ENCODE measurements at regions of chr15 and their contacts with region 1.

Region 1: GRCh38 chr15:38699633-38700230 is 135.1 kb upstream of the RASGRP1 start:
- DNase-seq: peak in 1 of 2 donors; percentile 56
- ATAC-seq: no peak
- H3K4me3 ChIP-seq: no peak overlapping the region
- H3K27ac ChIP-seq: no peak overlapping the region
- H3K4me1 ChIP-seq: no peaks in the 10 kb centered on the region
- H3K27me3 ChIP-seq: no peaks in the 10 kb centered on the region

Region 2: GRCh38 chr15:38758043-38758442 is 58.3 kb after region 1 on chr15:
- intact Hi-C with region 1: no loop called
- DNase-seq: no peak
- ATAC-seq: no peak
- H3K4me3 ChIP-seq: no peak overlapping the region
- H3K27ac ChIP-seq: no peak overlapping the region
- H3K4me1 ChIP-seq: no peaks in the 10 kb centered on the region
- H3K27me3 ChIP-seq: no peaks in the 10 kb centered on the region

Region 3: GRCh38 chr15:38817427-38818156 is 117.9 kb after region 1 on chr15:
- intact Hi-C with region 1: loop called in 1 of 2 experiments (anchors 10 kb)
- DNase-seq: peak; percentile 76 to 93
- ATAC-seq: peak; percentile 91
- H3K4me3 ChIP-seq: no peak overlapping the region
- H3K27ac ChIP-seq: no peak overlapping the region
- H3K4me1 ChIP-seq: no peaks in the 10 kb centered on the region
- H3K27me3 ChIP-seq: no peaks in the 10 kb centered on the region

Region 4: DNA sequence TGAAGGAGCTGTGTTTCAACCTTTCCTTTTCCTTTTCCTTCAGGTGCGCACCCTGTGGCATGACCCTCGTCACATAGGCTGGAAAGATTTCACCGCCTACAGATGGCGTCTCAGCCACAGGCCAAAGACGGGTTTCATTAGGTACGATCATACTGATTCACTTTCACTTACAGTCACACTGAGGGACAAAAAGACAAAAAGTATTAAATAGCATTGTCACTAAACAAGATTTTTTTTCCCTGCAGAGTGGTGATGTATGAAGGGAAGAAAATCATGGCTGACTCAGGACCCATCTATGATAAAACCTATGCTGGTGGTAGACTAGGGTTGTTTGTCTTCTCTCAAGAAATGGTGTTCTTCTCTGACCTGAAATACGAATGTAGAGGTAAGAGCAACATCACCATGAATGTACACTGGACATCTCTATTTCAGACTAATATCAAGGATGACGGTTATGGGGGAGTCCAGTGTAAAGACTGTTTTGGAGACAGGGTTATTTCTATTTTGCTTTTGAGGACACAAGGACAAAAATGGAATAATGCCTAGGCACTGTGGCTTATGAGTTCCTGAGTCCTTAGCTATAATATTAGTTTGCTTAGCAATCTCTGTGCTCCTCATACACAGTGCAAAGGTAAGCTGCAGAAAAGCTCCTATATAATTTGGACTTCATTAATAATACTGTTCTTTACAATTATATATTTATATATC is 894.5 kb after region 1 on chr15:
- intact Hi-C with region 1: loop called in 1 of 2 experiments (anchors 5 kb)
- DNase-seq: no peak
- ATAC-seq: no peak
- H3K4me3 ChIP-seq: no peak overlapping the region
- H3K27ac ChIP-seq: no peak overlapping the region
- H3K4me1 ChIP-seq: no peaks in the 10 kb centered on the region
- H3K27me3 ChIP-seq: no peaks in the 10 kb centered on the region

Measured in aorta (tissue), 5 donors.